Prostate gland (tissue), 2 donors: ENCODE measurements at regions of chr5 and their contacts with region 1.

Region 1: GRCh38 chr5:147188200-147189108 is 46.4 kb upstream of the STK32A start:
- DNase-seq: peak; percentile 38
- H3K4me3 ChIP-seq: no peak overlapping the region
- H3K27ac ChIP-seq: no peak overlapping the region
- H3K4me1 ChIP-seq: no peaks in the 10 kb centered on the region
- H3K27me3 ChIP-seq: peaks cover 3% of the 10 kb centered on the region
- CTCF ChIP-seq: peak; percentile 66 to 93 (median 72)
- POLR2A ChIP-seq: no peak

Region 2: DNA sequence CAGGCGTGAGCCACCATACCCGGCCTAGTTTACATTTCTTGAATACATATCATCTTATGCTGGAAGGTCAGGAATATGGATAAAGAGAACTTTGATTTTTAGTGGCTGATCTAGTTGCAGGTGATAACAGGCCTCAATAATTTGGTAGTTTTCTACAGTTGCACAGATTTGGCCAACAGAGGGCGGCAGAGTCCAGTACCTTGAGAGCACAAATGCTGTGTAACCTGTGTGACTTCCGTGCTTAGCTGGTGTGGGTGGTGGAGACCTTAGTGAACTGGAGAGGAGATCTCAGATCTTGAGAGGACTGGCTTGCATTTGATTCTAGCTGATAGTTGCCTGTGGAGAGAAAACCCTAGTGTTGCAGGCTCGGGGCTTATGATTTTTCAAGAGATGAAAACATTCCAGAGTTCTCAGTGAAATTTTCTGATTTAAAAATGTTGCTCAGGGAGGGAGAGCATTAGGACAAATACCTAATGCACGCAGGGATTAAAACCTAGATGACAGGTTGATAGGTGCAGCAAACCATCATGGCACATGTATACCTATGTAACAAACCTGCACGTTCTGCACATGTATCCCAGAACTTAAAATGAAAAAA is 655.1 kb before region 1 on chr5:
- intact Hi-C with region 1: loop called (anchors 2 kb)
- DNase-seq: peak; percentile 41
- H3K4me3 ChIP-seq: no peak overlapping the region
- H3K27ac ChIP-seq: no peak overlapping the region
- H3K4me1 ChIP-seq: no peaks in the 10 kb centered on the region
- H3K27me3 ChIP-seq: no peaks in the 10 kb centered on the region
- CTCF ChIP-seq: peak; percentile 39 to 70 (median 55)
- POLR2A ChIP-seq: no peak

Region 3: GRCh38 chr5:147321569-147321968 is 133.1 kb after region 1 on chr5:
- intact Hi-C with region 1: no loop called
- DNase-seq: no peak
- H3K4me3 ChIP-seq: no peak overlapping the region
- H3K27ac ChIP-seq: no peak overlapping the region
- H3K4me1 ChIP-seq: no peaks in the 10 kb centered on the region
- H3K27me3 ChIP-seq: no peaks in the 10 kb centered on the region
- CTCF ChIP-seq: no peak
- POLR2A ChIP-seq: no peak